Heart right ventricle (tissue), 16 donors: ENCODE measurements at regions of chr7 and their contacts with region 1.

Region 1: GRCh38 chr7:147120977-147121376 is 1004.4 kb downstream of the CNTNAP2 start:
- DNase-seq: no peak
- ATAC-seq: no peak
- H3K4me3 ChIP-seq: no peak overlapping the region
- H3K27ac ChIP-seq: no peak overlapping the region
- H3K4me1 ChIP-seq: no peaks in the 10 kb centered on the region
- H3K27me3 ChIP-seq: no peaks in the 10 kb centered on the region
- CTCF ChIP-seq: no peak

Region 2: GRCh38 chr7:147452816-147453215 is 331.8 kb after region 1 on chr7:
- intact Hi-C with region 1: loop called in 1 of 10 experiments (anchors 5 kb)
- DNase-seq: no peak
- ATAC-seq: no peak
- H3K4me3 ChIP-seq: no peak overlapping the region
- H3K27ac ChIP-seq: no peak overlapping the region
- H3K4me1 ChIP-seq: no peaks in the 10 kb centered on the region
- H3K27me3 ChIP-seq: no peaks in the 10 kb centered on the region
- CTCF ChIP-seq: no peak